ENCODE measurements at regions of chr6 and their contacts with region 1.

Region 1: DNA sequence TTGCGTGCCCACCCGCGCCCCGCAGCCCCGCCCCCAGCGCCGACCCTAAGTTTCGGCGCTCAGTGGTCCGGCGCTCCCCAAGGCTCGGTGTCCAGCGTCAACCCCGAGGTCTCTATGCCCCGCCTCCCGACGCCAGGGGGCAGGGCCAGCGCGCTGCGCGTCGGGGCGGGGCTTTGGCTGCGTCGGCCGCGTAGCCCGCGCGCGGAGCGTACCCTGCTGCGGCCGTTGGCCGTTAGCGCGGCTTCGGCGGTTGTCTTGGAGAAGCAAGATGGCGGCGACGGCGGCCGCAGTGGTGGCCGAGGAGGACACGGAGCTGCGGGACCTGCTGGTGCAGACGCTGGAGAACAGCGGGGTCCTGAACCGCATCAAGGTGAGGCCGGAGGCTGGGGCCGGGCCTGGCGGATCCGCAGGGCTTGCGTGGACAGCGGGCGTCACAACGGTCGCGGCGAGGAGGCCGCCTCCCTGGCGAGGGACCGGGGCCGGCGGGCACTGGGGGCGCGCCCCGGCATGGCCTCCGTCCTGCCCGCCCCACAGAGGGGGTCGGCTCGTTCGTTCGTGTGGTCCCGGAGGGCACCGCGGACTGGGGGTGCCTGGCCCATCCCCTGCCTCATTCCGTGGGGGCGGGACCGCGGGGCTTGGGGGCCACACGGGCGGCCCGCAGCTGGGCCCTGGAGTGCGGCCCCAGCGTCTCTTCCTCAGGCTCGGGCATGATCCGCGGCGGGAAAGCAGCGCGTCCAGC is at the start of gene CEP43:
- DNase-seq: peak; percentile 94 to 97 (median 97)
- H3K4me3 ChIP-seq: peak within 1 kb of the TSS; percentile 96
- H3K27ac ChIP-seq: peak within 1 kb of the TSS; percentile 41 to 61
- H3K4me1 ChIP-seq: peaks cover 5% of the 10 kb centered on the region
- H3K27me3 ChIP-seq: no peaks in the 10 kb centered on the region
- CTCF ChIP-seq: peak in 2 of 3 donors; percentile 13 to 26
- EP300 ChIP-seq: no peak
- POLR2A ChIP-seq: no peak
- total RNA-seq, gene CEP43: 12.3 to 39.5 (median 15.4) TPM

Region 2: GRCh38 chr6:167141667-167142432 is 142.5 kb after region 1 on chr6:
- intact Hi-C with region 1: loop called in 2 of 4 experiments (anchors 5 kb)
- DNase-seq: peak; percentile 30 to 74 (median 54)
- H3K4me3 ChIP-seq: no peak overlapping the region
- H3K27ac ChIP-seq: no peak overlapping the region
- H3K4me1 ChIP-seq: no peaks in the 10 kb centered on the region
- H3K27me3 ChIP-seq: no peaks in the 10 kb centered on the region
- CTCF ChIP-seq: peak; percentile 22 to 71 (median 65)
- EP300 ChIP-seq: no peak
- POLR2A ChIP-seq: no peak

Measured in ovary (tissue), 10 donors.